IMR-90 (cell line): ENCODE measurements at regions of chr11 and their contacts with region 1.

Region 1: DNA sequence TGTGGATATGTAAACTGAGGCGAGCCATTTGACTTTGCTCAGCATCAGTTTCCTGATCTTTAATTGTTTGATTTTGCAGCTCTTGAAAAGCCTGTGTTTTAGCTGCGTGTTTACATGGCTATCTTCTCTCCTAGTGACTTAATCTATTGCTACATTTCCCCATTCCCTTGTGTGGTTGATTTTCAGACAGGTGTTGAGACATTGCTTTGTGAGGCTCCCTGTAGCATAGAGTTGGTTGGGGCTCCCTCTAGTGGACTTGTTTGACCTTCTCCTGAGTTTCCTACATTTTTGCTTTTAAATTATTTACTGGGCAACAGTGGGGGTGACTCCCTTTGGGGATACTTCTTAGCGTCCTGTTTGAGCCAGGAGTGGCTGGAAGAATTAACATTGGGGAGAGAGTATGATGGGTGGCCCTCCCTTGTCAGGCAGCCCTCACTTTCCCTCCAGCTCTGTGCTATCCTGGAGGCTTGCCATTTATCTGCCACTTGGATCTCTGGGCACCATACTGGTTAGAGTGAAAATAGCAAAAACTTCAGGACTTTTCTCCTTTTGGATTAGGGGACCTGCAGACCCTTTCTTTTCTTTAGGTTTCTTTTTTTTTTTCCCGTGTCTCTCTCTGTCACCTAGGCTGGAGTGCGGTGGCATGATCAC is 9.2 kb upstream of the CBL start:
- DNase-seq: peak; percentile 85
- ATAC-seq: peak; percentile 87
- H3K4me3 ChIP-seq: no peak overlapping the region
- H3K27ac ChIP-seq: no peak overlapping the region
- H3K4me1 ChIP-seq: no peaks in the 10 kb centered on the region
- H3K27me3 ChIP-seq: peaks cover 6% of the 10 kb centered on the region
- CTCF ChIP-seq: peak; percentile 92
- POLR2A ChIP-seq: 0 out of 2 replicates have a peak, but pooled peaks have one; percentile 26
- RAD21 ChIP-seq: peak; percentile 89

Region 2: DNA sequence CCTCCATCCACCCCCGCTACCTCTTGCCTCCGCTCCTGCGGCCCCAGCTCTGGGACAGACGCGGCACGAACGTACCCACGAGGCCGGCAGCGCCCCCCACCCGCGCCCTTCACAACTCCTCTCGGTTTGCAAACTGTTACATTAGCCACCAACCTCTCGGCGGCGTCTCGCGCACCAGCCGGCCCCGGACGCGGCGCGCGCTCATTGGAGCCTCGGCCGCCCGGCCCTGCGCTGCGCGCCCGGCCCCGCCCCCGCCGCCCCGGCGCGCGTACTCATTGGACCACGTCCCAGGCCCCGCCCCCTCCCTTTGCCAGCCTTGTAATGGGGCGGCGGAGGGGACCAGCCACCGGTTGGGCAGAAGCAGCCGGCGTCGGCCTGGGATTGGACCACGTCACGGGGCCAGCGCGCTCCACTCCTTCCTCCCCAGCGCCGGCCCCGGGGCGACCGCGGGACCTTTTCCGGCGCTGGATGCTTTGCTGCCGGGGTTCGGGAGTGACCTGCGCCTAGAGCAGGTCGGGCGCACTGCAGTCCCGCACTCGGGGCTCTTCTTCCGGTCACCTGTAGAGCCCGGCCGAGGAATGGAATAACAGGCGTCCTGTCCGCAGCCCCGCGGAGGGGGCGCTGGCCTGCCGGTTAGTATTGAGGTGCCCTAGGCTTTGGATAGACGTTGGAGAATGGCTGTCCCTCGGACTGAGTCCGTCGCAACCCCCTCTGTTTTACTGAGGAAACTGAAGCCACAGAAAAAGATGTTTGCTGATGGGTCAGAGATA is 139.8 kb before region 1 on chr11 and contains the start of gene HYOU1:
- CTCF ChIA-PET with region 1: no interaction called
- POLR2A ChIA-PET with region 1: no interaction called
- dilution Hi-C with region 1: no loop called
- in situ Hi-C with region 1: no loop called
- intact Hi-C with region 1: loop called (anchors 1 kb)
- DNase-seq: peak; percentile 93
- ATAC-seq: peak; percentile 97
- H3K4me3 ChIP-seq: peak within 1 kb of the TSS; percentile 90
- H3K27ac ChIP-seq: peak within 1 kb of the TSS; percentile 74
- H3K4me1 ChIP-seq: peaks cover 4% of the 10 kb centered on the region; the same call in 1 of the 2 replicates
- H3K27me3 ChIP-seq: no peaks in the 10 kb centered on the region
- CTCF ChIP-seq: peak; percentile 22; the same call in 1 of the 2 replicates
- POLR2A ChIP-seq: peak; percentile 92
- RAD21 ChIP-seq: no peak
- total RNA-seq, gene HYOU1: 152 and 181 TPM in 2 replicates

Region 3: DNA sequence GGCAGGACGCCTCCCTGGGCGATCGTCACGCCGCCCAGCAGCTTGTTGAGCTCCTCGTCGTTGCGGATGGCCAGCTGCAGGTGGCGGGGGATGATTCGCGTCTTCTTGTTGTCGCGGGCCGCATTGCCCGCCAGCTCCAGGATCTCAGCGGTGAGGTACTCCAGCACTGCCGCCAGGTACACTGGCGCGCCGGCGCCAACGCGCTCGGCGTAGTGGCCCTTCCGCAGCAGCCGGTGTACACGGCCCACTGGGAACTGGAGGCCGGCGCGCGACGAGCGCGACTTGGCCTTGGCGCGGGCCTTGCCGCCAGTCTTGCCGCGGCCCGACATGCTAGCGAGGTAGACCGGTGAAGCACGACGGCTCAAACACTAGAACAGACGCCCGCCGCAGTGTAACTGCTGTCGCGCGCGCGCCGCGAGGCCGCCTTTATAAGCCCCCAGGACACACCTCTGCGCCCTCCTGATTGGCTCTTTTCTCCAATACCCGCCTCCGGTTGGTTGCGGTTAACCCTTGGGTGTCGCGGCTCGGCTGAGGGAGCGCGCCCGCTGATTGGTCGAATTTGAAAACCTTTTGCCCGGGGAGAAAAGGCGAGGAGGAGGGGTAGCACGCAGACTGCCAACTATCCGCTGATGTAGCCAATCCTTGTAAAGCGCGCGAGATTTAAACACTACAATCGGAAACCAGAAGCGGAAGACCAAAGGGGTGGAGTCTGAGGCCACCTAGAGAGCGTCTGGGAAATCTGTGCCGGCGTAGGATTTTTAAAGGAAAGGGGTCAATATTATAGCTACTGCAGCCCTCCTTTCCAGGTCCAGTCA is 101.7 kb before region 1 on chr11:
- CTCF ChIA-PET with region 1: no interaction called
- POLR2A ChIA-PET with region 1: no interaction called
- dilution Hi-C with region 1: no loop called
- in situ Hi-C with region 1: loop called (anchors 5 kb)
- intact Hi-C with region 1: loop called (anchors 1 kb)
- DNase-seq: peak; percentile 99
- ATAC-seq: peak; percentile 90
- H3K4me3 ChIP-seq: peak overlapping the region; percentile 57
- H3K27ac ChIP-seq: peak overlapping the region; percentile 44; the same call in 1 of the 2 replicates
- H3K4me1 ChIP-seq: peaks cover 15% of the 10 kb centered on the region
- H3K27me3 ChIP-seq: no peaks in the 10 kb centered on the region
- CTCF ChIP-seq: no peak
- POLR2A ChIP-seq: peak; percentile 100
- RAD21 ChIP-seq: no peak

Region 4: GRCh38 chr11:119101759-119102423 is 95.1 kb before region 1 on chr11 and contains the start of gene DPAGT1:
- CTCF ChIA-PET with region 1: no interaction called
- POLR2A ChIA-PET with region 1: no interaction called
- dilution Hi-C with region 1: no loop called
- in situ Hi-C with region 1: loop called (anchors 5 kb)
- intact Hi-C with region 1: loop called (anchors 2 kb)
- DNase-seq: peak; percentile 97
- ATAC-seq: peak; percentile 86
- H3K4me3 ChIP-seq: peak within 1 kb of the TSS; percentile 72
- H3K27ac ChIP-seq: peak within 1 kb of the TSS; percentile 80
- H3K4me1 ChIP-seq: peaks cover 8% of the 10 kb centered on the region
- H3K27me3 ChIP-seq: no peaks in the 10 kb centered on the region
- CTCF ChIP-seq: no peak
- POLR2A ChIP-seq: peak; percentile 41; the same call in 1 of the 2 replicates
- RAD21 ChIP-seq: no peak
- total RNA-seq, gene DPAGT1: 13.6 and 15.2 TPM in 2 replicates

Region 5: GRCh38 chr11:119144825-119145486 is 52.0 kb before region 1 on chr11:
- CTCF ChIA-PET with region 1: interaction called, 3 read pairs
- POLR2A ChIA-PET with region 1: no interaction called
- dilution Hi-C with region 1: no loop called
- in situ Hi-C with region 1: no loop called
- intact Hi-C with region 1: loop called (anchors 1 kb)
- DNase-seq: peak; percentile 68
- ATAC-seq: peak; percentile 90
- H3K4me3 ChIP-seq: no peak overlapping the region
- H3K27ac ChIP-seq: no peak overlapping the region
- H3K4me1 ChIP-seq: 0 out of 2 replicates have a peak, but pooled peaks cover 2% of the 10 kb centered on the region
- H3K27me3 ChIP-seq: peaks cover 24% of the 10 kb centered on the region
- CTCF ChIP-seq: peak; percentile 62
- POLR2A ChIP-seq: no peak
- RAD21 ChIP-seq: peak; percentile 50

Region 6: GRCh38 chr11:119168471-119169281 is 28.3 kb before region 1 on chr11 and contains the start of gene NLRX1:
- CTCF ChIA-PET with region 1: interaction called, 3 read pairs
- POLR2A ChIA-PET with region 1: no interaction called
- dilution Hi-C with region 1: no loop called
- in situ Hi-C with region 1: no loop called
- intact Hi-C with region 1: loop called (anchors 2 kb)
- DNase-seq: peak; percentile 72
- ATAC-seq: peak; percentile 94
- H3K4me3 ChIP-seq: peak within 1 kb of the TSS; percentile 59
- H3K27ac ChIP-seq: peak within 1 kb of the TSS; percentile 49
- H3K4me1 ChIP-seq: peaks cover 6% of the 10 kb centered on the region
- H3K27me3 ChIP-seq: no peaks in the 10 kb centered on the region
- CTCF ChIP-seq: peak; percentile 79
- POLR2A ChIP-seq: peak; percentile 81
- RAD21 ChIP-seq: peak; percentile 49
- total RNA-seq, gene NLRX1: 3.0 and 3.3 TPM in 2 replicates